Head of caudate nucleus (tissue), 42 donors: ENCODE measurements at regions of chr7 and their contacts with region 1.

Region 1: DNA sequence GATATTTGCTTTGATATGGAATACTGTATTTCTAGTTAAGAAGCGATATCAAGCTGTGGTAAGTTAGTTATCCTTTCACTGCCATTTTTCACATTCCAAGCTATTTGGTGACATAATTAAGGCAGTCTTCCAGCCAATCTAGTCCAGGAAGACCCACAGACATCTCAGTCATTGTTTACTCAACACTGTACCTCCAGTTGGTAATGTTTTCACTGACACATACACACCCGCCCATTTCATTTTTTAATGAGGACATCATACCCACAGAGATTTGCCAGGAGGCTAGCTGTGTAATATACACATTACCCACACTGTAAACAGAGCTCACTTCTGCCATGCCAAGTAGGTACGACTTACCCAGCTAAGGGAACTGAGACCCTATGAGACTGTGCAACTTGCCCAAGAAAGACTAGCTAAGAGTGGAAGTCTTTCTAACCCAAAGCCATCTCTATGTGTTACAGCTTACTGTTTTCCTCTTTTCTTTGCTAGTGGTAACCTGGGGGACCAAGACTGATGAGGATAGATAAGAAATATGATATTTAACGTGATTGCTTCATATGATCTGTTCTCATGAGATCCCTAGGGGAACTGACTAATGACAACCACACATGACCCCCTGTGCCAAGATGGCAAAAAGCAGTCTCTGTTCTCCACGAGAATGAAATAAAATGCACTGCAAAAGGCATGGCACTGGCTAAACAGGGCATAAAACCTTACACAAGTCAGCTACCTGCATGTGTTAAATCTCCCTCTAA is 179.0 kb downstream of the DGKI start:
- DNase-seq: no peak

Region 2: DNA sequence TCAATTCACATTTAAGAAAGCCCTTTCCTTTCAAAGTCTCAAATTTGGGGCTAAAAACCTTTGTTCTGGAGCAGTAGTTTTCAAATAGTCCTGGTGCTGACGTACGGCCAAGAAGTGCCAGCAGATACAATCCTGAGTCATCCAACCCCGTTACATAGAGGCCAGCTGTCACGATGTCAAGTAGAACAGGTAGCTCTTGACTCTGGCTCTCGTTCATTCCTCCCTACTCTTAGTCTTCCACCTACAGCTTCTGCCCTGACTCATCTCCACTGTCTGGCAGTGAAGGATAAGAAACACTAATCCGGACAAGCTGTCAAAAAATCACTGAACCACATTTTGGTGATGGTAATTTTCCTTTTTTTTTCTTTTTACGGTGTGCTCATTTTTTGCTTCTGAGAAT is 191.8 kb before region 1 on chr7:
- intact Hi-C with region 1: no loop called
- DNase-seq: peak in 25 of 42 donors; percentile 8 to 84 (median 44)

Region 3: GRCh38 chr7:137839903-137840779 is 172.3 kb after region 1 on chr7:
- intact Hi-C with region 1: loop called (anchors 10 kb)
- DNase-seq: no peak